ENCODE measurements at regions of chr9 and their contacts with region 1.

Region 1: DNA sequence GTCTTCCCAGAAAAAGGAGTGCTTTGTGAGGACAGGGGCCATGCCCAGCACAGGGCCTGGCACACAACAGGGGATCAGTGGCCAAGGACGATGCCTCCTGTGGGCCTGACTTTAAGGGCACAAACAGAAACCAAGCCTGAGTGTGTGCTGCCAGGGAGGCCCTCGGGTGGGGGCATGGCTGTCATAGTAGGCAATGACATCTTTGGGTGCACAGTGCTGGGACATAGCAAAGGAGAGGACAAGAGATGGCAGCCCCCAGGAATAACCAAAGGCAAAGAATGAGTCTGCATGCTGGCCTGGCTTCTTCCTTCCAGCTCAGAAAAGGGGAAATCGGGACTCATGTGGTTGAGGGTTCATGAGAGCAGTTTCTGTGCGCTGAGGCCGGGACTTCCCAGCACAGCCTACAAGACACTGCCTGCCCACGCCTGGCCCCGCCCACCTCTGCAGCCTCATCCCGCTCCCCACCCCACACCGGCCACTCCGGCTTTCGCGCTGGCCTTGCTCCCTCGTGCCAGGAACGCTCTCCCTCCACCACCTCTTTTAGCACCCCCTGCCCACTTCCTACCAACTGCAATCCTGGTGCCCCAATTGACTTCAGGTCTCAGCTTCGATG is 13.8 kb upstream of the LHX2 start:
- DNase-seq: no peak
- H3K4me3 Mint-ChIP-seq: peak overlapping the region; percentile 11
- H3K27ac Mint-ChIP-seq: no peak overlapping the region
- H3K4me1 Mint-ChIP-seq: peaks cover 20% of the 10 kb centered on the region
- H3K27me3 Mint-ChIP-seq: peaks cover 74% of the 10 kb centered on the region

Region 2: GRCh38 chr9:123544007-123544827 is 453.6 kb before region 1 on chr9:
- intact Hi-C with region 1: loop called (anchors 5 kb)
- DNase-seq: no peak
- H3K4me3 Mint-ChIP-seq: no peak overlapping the region
- H3K27ac Mint-ChIP-seq: no peak overlapping the region
- H3K4me1 Mint-ChIP-seq: peaks cover 5% of the 10 kb centered on the region
- H3K27me3 Mint-ChIP-seq: no peaks in the 10 kb centered on the region

Region 3: DNA sequence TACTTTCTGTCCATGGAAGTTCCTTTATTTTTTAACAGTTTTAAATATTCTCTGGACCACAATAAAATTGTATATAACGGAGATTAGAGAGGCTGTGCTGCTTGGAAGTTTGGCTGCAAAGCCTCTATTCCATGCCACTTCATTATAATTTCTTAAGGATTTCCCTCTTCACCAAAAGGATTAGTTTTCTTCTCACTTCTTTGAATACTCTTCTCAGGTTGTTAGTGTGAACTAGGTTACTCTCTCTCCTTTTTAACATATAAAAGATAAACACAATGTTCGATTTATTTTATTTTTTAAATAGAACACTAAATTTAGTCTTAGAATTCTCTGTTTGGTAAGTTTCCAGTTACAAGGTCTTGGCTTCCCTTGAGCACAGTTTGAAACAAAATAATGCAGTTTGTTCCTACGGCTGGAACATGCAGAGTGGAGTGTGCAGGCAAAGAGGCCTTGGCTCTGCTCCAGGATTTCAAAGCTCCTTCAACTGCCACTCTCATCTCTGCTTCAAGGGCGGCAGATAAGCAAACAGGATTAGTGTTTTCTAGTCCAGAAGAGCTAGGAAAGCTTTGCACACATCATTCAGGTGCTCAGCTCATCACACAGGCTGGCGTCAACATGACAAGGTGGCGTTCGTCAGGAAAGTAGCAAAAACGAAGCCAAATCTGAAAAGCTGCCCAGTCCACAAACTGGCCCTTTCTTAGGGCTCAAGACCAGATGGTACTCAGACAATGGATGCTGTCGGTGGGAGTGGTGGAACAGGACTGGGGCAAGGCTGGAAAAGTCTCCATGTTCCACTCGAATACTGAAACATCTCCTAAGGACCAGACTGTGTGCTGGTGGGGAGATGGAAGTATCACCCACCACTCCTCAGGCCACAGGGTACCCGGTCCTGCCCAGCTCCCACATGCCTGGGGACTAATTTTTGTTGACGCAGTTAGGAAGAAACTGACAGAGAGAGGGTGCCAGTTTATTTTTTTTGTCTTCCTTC is 355.2 kb before region 1 on chr9:
- intact Hi-C with region 1: loop called (anchors 10 kb)
- DNase-seq: no peak
- H3K4me3 Mint-ChIP-seq: no peak overlapping the region
- H3K27ac Mint-ChIP-seq: no peak overlapping the region
- H3K4me1 Mint-ChIP-seq: peaks cover 21% of the 10 kb centered on the region
- H3K27me3 Mint-ChIP-seq: peaks cover 54% of the 10 kb centered on the region

Region 4: DNA sequence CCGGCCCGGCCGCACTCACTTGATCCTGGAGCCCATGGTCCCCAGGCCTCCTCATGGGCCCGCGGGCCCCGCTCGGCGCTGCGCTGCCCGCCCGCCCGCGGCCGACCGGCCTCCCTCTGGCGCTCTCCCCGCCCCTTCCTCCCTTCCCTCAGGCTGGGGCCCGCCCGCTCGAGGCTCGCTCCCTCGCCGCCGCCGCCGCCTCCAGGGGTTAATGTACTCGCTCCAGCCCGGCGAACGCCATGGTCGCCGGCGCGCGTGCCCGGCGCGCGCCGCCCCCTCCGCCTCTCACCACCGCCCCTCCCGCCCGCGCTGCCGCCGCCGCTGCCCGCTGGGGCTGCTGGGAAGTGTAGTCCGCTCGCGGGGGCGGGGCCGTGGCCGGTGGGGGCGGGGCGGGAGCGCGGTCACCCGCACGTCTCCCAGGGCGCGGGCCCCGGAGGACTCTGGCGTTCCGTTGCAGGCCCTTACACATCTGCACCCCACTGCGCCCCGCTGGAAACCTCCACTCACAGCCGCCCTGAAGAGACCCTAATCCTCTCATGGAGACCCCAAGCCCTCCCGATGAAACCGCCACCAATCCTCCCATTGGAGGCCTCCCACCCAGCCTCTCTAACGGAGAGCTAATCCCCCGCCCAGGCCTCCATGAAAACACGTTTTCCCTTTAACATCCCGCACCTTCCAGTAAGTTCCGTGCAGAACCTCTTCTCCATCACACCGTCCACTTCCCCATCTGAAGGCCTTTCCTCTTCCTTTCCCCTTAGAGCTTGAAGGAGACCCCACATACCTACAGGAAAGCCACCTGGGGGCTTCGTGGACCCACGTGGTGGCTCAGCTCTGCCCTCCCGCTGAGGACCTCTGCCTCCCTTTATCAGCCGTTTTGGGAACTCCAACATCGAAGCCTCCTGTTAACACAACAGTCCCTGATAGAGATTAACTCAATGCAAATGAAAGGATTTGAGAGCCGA is 67.6 kb before region 1 on chr9 and contains the start of gene DENND1A:
- intact Hi-C with region 1: loop called (anchors 10 kb)
- DNase-seq: peak; percentile 85
- H3K4me3 Mint-ChIP-seq: peak within 1 kb of the TSS; percentile 86
- H3K27ac Mint-ChIP-seq: peak within 1 kb of the TSS; percentile 83
- H3K4me1 Mint-ChIP-seq: peaks cover 27% of the 10 kb centered on the region
- H3K27me3 Mint-ChIP-seq: peaks cover 5% of the 10 kb centered on the region
- total RNA-seq, gene DENND1A: 15.1 and 20.0 TPM in 2 replicates